ENCODE measurements at regions of chr10 and their contacts with region 1.

Region 1: GRCh38 chr10:127125331-127125730 is 71.1 kb downstream of the INSYN2A start:
- DNase-seq: no peak
- H3K4me3 Mint-ChIP-seq: no peak overlapping the region
- H3K27ac Mint-ChIP-seq: no peak overlapping the region
- H3K4me1 Mint-ChIP-seq: no peaks in the 10 kb centered on the region
- H3K27me3 Mint-ChIP-seq: no peaks in the 10 kb centered on the region

Region 2: GRCh38 chr10:126787201-126787600 is 338.1 kb before region 1 on chr10:
- CTCF ChIA-PET with region 1: no interaction called
- POLR2A ChIA-PET with region 1: no interaction called
- intact Hi-C with region 1: loop called (anchors 5 kb)
- DNase-seq: no peak
- H3K4me3 Mint-ChIP-seq: no peak overlapping the region
- H3K27ac Mint-ChIP-seq: no peak overlapping the region
- H3K4me1 Mint-ChIP-seq: no peaks in the 10 kb centered on the region
- H3K27me3 Mint-ChIP-seq: no peaks in the 10 kb centered on the region

Measured in activated CD4-positive, alpha-beta memory T cell treated with anti-CD3 and anti-CD28 coated beads for 36 hours (primary cell).